ENCODE measurements at regions of chr5 and their contacts with region 1.

Region 1: DNA sequence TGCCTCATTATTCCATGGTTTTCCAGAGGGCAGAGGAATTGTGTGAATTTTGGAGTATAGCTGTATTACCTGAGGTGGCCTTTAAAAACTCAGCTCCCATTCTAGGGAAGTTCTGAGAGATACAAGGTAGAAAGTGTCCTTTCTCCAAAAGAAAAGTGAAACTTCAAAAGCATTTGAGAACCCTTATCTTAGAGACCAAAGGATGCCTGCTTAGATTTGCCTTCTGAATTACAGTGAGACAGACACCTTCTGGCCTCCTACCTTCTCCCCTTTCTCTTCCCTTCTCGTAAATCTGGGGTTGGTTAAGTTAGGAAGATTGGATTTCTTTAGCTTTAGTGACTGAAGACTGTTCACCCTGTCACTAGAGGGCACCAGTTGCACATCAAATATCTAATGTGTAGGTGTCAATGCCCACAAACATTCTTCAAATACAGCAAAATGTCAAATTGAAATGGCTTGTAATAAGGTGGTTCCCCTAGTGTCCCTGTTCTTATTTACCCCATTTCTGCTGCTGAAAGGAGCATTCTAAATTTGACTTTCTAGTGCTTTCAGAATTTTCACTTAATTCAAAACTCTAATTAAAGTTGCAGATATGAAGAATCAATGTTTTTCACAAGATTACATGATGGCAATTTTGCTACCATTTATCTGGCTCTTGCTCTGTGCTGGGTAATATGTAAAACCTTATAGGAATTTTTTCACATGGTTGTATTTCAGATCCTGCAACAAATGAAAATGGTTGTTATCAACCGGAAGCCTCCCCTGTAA is 46.7 kb downstream of the PRRC1 start:
- DNase-seq: peak in 2 of 4 donors; percentile 50 to 72
- ATAC-seq: peak; percentile 88
- H3K4me3 ChIP-seq: no peak overlapping the region
- H3K27ac ChIP-seq: no peak overlapping the region
- H3K4me1 ChIP-seq: peaks cover 0 to 20% of the 10 kb centered on the region in 2 donors
- H3K27me3 ChIP-seq: peaks cover 0 to 2% of the 10 kb centered on the region in 2 donors
- CTCF ChIP-seq: peak; percentile 54 to 58

Region 2: DNA sequence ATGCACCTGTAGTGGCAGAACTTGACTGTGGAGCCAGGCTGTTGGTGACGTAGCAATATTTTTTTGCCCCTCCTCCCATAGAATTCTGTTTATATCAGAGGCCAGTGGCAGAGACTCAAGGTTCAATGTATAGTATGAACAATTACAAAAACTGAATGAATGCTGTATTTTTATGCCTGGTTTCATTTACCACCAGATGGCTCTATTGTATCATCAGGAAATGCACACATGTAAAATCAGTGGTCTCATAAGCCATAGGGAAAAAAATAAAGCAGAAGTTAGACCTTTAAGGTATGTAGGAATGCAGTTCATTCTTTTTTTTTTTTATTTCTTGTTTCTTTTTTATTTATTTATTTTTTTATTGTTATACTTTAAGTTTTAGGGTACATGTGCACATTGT is 182.6 kb after region 1 on chr5:
- intact Hi-C with region 1: loop called in 1 of 2 experiments (anchors 10 kb)
- DNase-seq: peak in 1 of 4 donors; percentile 21
- ATAC-seq: peak; percentile 57
- H3K4me3 ChIP-seq: no peak overlapping the region
- H3K27ac ChIP-seq: no peak overlapping the region
- H3K4me1 ChIP-seq: no peaks in the 10 kb centered on the region
- H3K27me3 ChIP-seq: no peaks in the 10 kb centered on the region
- CTCF ChIP-seq: peak in 1 of 2 donors; percentile 24